K562 (cell line): ENCODE measurements at regions of chr1 and their contacts with region 1.

Region 1: GRCh38 chr1:39609618-39610331 is 29.7 kb downstream of the HEYL start:
- DNase-seq: peak; percentile 64 to 72 (median 71)
- ATAC-seq: peak; percentile 90
- H3K4me3 ChIP-seq: no peak overlapping the region
- H3K27ac ChIP-seq: no peak overlapping the region
- H3K4me1 ChIP-seq: peaks cover 0 to 11% of the 10 kb centered on the region in 2 experiments; a peak in 2 of 5 replicates
- H3K27me3 ChIP-seq: no peaks in the 10 kb centered on the region
- CTCF ChIP-seq: peak; percentile 67 to 89 (median 67)
- EP300 ChIP-seq: no peak
- POLR2A ChIP-seq: no peak
- RAD21 ChIP-seq: peak in 1 of 2 experiments; percentile 28; a peak in 1 of 4 replicates

Region 2: GRCh38 chr1:39639305-39640130 is 29.7 kb after region 1 on chr1 and contains the start of gene HEYL:
- CTCF ChIA-PET with region 1: interaction called, 13 read pairs
- POLR2A ChIA-PET with region 1: interaction called, 4 read pairs
- in situ Hi-C with region 1: no loop called
- intact Hi-C with region 1: no loop called
- DNase-seq: peak; percentile 83 to 97 (median 92)
- ATAC-seq: peak; percentile 99
- H3K4me3 ChIP-seq: peak within 1 kb of the TSS; percentile 48
- H3K27ac ChIP-seq: no peak within 1 kb of the TSS; the same call in 2 of the 3 replicates
- H3K4me1 ChIP-seq: peaks cover 9 to 12% of the 10 kb centered on the region in 2 experiments
- H3K27me3 ChIP-seq: peaks cover 13 to 39% of the 10 kb centered on the region in 2 experiments; a peak in 4 of 5 replicates
- CTCF ChIP-seq: peak; percentile 76 to 98 (median 86)
- EP300 ChIP-seq: no peak
- POLR2A ChIP-seq: 0 out of 2 replicates have a peak, but pooled peaks have one; percentile 35
- RAD21 ChIP-seq: peak; percentile 47 to 53
- polyA plus RNA-seq, gene HEYL: 0.13 to 0.14 TPM

Region 3: GRCh38 chr1:39653546-39654031 is 43.8 kb after region 1 on chr1:
- CTCF ChIA-PET with region 1: interaction called, 37 read pairs
- POLR2A ChIA-PET with region 1: interaction called, 8 read pairs
- in situ Hi-C with region 1: no loop called
- intact Hi-C with region 1: loop called (anchors 1 kb)
- DNase-seq: peak; percentile 73 to 87 (median 76)
- ATAC-seq: peak; percentile 81
- H3K4me3 ChIP-seq: no peak overlapping the region
- H3K27ac ChIP-seq: no peak overlapping the region
- H3K4me1 ChIP-seq: peaks cover 7% of the 10 kb centered on the region in 2 experiments; a peak in 2 of 5 replicates
- H3K27me3 ChIP-seq: peaks cover 3 to 18% of the 10 kb centered on the region in 2 experiments; a peak in 4 of 5 replicates
- CTCF ChIP-seq: peak; percentile 92 to 97 (median 95)
- EP300 ChIP-seq: no peak
- POLR2A ChIP-seq: no peak
- RAD21 ChIP-seq: peak; percentile 88 to 95

Region 4: DNA sequence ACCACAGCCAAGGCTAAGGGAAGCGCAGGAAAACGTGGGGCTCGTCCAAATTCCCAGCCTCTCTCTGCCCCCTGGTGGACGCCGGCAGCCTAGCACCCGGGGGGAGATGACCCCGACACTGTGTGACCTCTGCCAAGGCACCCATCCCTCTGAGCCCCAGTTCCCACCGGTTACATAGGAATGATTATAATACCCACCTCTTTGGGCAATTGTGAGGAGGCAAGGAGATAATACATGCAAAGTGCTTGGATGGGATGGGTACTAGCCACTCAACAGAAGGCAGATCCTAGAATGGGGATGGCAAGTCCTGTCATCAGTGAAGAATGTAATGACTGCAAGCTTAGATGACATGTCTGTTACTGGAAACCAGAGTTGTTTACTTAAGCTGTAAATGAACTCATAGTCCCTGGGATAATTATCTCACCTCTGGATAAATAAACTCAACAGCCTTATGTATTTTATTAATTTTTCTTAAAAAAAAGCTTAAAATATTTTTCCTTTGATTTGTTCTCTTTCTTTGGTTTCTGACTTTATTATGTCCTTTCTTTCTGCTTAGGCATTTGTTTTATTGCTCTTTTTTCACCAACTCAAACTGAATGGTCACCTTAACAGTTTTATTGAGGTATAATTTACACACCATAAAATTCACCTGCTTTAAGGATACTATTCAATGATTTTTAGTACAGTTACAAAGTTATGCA is 190.1 kb after region 1 on chr1:
- CTCF ChIA-PET with region 1: interaction called, 9 read pairs
- POLR2A ChIA-PET with region 1: no interaction called
- in situ Hi-C with region 1: no loop called
- intact Hi-C with region 1: loop called (anchors 5 kb)
- DNase-seq: peak; percentile 86 to 89 (median 88)
- ATAC-seq: peak; percentile 94
- H3K4me3 ChIP-seq: no peak overlapping the region
- H3K27ac ChIP-seq: peak overlapping the region; percentile 74
- H3K4me1 ChIP-seq: peaks cover 9 to 10% of the 10 kb centered on the region in 2 experiments; a peak in 4 of 5 replicates
- H3K27me3 ChIP-seq: no peaks in the 10 kb centered on the region
- CTCF ChIP-seq: peak; percentile 87 to 93 (median 92)
- EP300 ChIP-seq: no peak
- POLR2A ChIP-seq: no peak
- RAD21 ChIP-seq: peak; percentile 85 to 94